CD4-positive, alpha-beta memory T cell (primary cell): ENCODE measurements at regions of chr1 and their contacts with region 1.

Region 1: GRCh38 chr1:24586970-24587820 is 31.3 kb downstream of the NCMAP start:
- DNase-seq: peak; percentile 69 to 78 (median 74)
- H3K4me3 ChIP-seq: no peak overlapping the region
- H3K4me3 Mint-ChIP-seq: peak overlapping the region in 1 of 8 donors; percentile 46
- H3K27ac ChIP-seq: no peak overlapping the region
- H3K27ac Mint-ChIP-seq: peak overlapping the region in 6 of 7 donors; percentile 53 to 89 (median 80)
- H3K4me1 ChIP-seq: peaks cover 5% of the 10 kb centered on the region
- H3K4me1 Mint-ChIP-seq: peaks cover 0 to 9% (median 6%) of the 10 kb centered on the region in 4 donors
- H3K27me3 ChIP-seq: no peaks in the 10 kb centered on the region
- H3K27me3 Mint-ChIP-seq: peaks cover 0 to 1% of the 10 kb centered on the region in 2 donors

Region 2: DNA sequence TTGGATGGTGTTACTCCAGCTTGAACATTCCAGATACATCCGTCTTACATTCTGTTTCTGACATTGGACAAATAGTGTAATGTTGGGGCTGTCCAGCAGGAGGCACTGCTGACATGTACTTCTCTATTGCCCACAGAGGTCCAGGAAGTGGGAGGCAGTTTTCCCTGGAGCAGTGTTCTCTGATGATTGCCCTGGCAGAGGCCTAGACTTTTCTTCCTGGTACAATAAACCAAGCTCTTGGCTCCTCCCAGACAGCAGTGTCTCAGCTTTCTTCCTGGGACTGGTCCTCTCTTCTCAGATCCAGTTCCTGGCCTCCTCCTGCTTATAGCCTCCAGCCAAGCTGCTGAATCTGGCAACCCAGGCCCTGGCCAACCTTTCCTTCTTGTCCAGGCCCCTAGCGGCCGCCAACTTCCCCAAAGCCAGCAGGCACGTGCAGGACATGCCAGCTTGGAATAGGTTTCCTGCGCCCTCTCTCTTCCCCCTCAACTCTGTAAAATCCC is 385.2 kb before region 1 on chr1:
- CTCF ChIA-PET with region 1: interaction called, 55 read pairs
- POLR2A ChIA-PET with region 1: interaction called, 5 read pairs
- intact Hi-C with region 1: loop called (anchors 1 kb)
- DNase-seq: peak; percentile 32 to 53 (median 43)
- H3K4me3 ChIP-seq: no peak overlapping the region
- H3K4me3 Mint-ChIP-seq: no peak overlapping the region
- H3K27ac ChIP-seq: no peak overlapping the region
- H3K27ac Mint-ChIP-seq: peak overlapping the region in 3 of 7 donors; percentile 11 to 50 (median 36)
- H3K4me1 ChIP-seq: peaks cover 5% of the 10 kb centered on the region
- H3K4me1 Mint-ChIP-seq: peaks cover 3 to 13% (median 6%) of the 10 kb centered on the region in 4 donors
- H3K27me3 ChIP-seq: no peaks in the 10 kb centered on the region
- H3K27me3 Mint-ChIP-seq: no peaks in the 10 kb centered on the region

Region 3: GRCh38 chr1:24409535-24409934 is 177.7 kb before region 1 on chr1:
- CTCF ChIA-PET with region 1: interaction called, 129 read pairs
- POLR2A ChIA-PET with region 1: interaction called, 34 read pairs
- intact Hi-C with region 1: no loop called
- DNase-seq: no peak
- H3K4me3 ChIP-seq: no peak overlapping the region
- H3K4me3 Mint-ChIP-seq: no peak overlapping the region
- H3K27ac ChIP-seq: no peak overlapping the region
- H3K27ac Mint-ChIP-seq: no peak overlapping the region
- H3K4me1 ChIP-seq: peaks cover 12% of the 10 kb centered on the region
- H3K4me1 Mint-ChIP-seq: peaks cover 9 to 21% (median 15%) of the 10 kb centered on the region in 4 donors
- H3K27me3 ChIP-seq: no peaks in the 10 kb centered on the region
- H3K27me3 Mint-ChIP-seq: no peaks in the 10 kb centered on the region

Region 4: DNA sequence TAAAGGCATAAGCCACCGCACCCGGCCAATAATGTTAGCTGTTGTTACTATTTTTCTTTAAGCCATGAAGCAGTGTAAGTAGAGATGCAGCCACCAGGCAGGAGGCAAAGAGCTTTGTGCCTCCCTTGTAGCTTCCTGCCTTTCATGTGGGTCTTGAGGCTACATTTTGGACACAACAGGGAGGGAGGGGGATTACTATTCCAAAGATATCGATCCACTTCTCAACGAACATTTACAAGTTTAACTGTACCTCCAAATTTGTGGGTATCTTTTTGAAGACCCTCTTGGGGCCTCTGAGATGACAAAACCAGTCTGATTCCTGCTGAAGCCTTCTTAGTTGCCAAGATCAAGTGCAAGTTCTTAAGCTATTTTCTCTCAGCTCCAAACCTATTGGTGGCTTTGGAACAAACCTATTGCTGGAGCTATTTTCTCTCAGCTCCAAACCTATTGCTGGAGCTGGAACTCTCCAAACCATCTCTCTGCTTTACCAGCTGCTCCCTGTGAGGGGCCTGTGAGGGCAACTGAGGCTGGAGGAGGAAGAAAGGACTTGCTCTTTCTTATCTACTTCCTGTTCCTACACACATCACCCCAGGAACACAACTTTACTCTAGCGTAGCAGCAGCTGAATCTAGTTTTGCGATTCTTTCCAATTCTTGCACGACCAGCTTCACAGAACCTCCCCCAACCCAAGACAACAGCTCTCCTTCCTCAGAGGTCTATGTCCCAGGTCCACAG is 100.7 kb before region 1 on chr1:
- CTCF ChIA-PET with region 1: interaction called, 19 read pairs
- POLR2A ChIA-PET with region 1: interaction called, 7 read pairs
- intact Hi-C with region 1: loop called (anchors 5 kb)
- DNase-seq: peak; percentile 72 to 79 (median 75)
- H3K4me3 ChIP-seq: peak overlapping the region in 1 of 2 donors; percentile 21
- H3K4me3 Mint-ChIP-seq: peak overlapping the region; percentile 66 to 88 (median 82)
- H3K27ac ChIP-seq: peak overlapping the region; percentile 58
- H3K27ac Mint-ChIP-seq: peak overlapping the region; percentile 92 to 98 (median 93)
- H3K4me1 ChIP-seq: peaks cover 82% of the 10 kb centered on the region
- H3K4me1 Mint-ChIP-seq: peaks cover 50 to 82% (median 63%) of the 10 kb centered on the region in 4 donors
- H3K27me3 ChIP-seq: no peaks in the 10 kb centered on the region
- H3K27me3 Mint-ChIP-seq: no peaks in the 10 kb centered on the region

Region 5: GRCh38 chr1:24536391-24536840 is 50.8 kb before region 1 on chr1:
- CTCF ChIA-PET with region 1: interaction called, 23 read pairs
- POLR2A ChIA-PET with region 1: interaction called, 4 read pairs
- intact Hi-C with region 1: loop called (anchors 2 kb)
- DNase-seq: peak; percentile 83 to 93 (median 86)
- H3K4me3 ChIP-seq: peak overlapping the region in 1 of 2 donors; percentile 32
- H3K4me3 Mint-ChIP-seq: peak overlapping the region; percentile 76 to 92 (median 88)
- H3K27ac ChIP-seq: peak overlapping the region; percentile 88
- H3K27ac Mint-ChIP-seq: peak overlapping the region; percentile 98 to 100 (median 100)
- H3K4me1 ChIP-seq: peaks cover 83% of the 10 kb centered on the region
- H3K4me1 Mint-ChIP-seq: peaks cover 57 to 82% (median 68%) of the 10 kb centered on the region in 4 donors
- H3K27me3 ChIP-seq: no peaks in the 10 kb centered on the region
- H3K27me3 Mint-ChIP-seq: no peaks in the 10 kb centered on the region

Region 6: GRCh38 chr1:24566236-24566867 is 20.8 kb before region 1 on chr1:
- CTCF ChIA-PET with region 1: interaction called, 10 read pairs
- POLR2A ChIA-PET with region 1: no interaction called
- intact Hi-C with region 1: no loop called
- DNase-seq: no peak
- H3K4me3 ChIP-seq: no peak overlapping the region
- H3K4me3 Mint-ChIP-seq: no peak overlapping the region
- H3K27ac ChIP-seq: no peak overlapping the region
- H3K27ac Mint-ChIP-seq: peak overlapping the region in 2 of 7 donors; percentile 7 to 77
- H3K4me1 ChIP-seq: no peaks in the 10 kb centered on the region
- H3K4me1 Mint-ChIP-seq: peaks cover 0 to 6% (median 2%) of the 10 kb centered on the region in 4 donors
- H3K27me3 ChIP-seq: no peaks in the 10 kb centered on the region
- H3K27me3 Mint-ChIP-seq: no peaks in the 10 kb centered on the region